Psoas muscle (tissue), 8 donors: ENCODE measurements at regions of chr19 and their contacts with region 1.

Region 1: GRCh38 chr19:46614114-46614722 is 10.7 kb downstream of the PTGIR start:
- DNase-seq: peak; percentile 86 to 90
- ATAC-seq: peak; percentile 81 to 93 (median 86)
- H3K4me3 ChIP-seq: no peak overlapping the region
- H3K27ac ChIP-seq: no peak overlapping the region
- H3K4me1 ChIP-seq: peaks cover 17% of the 10 kb centered on the region
- H3K27me3 ChIP-seq: no peaks in the 10 kb centered on the region
- CTCF ChIP-seq: peak; percentile 87

Region 2: GRCh38 chr19:46571531-46571930 is 42.7 kb before region 1 on chr19:
- intact Hi-C with region 1: no loop called
- DNase-seq: no peak
- ATAC-seq: no peak
- H3K4me3 ChIP-seq: no peak overlapping the region
- H3K27ac ChIP-seq: no peak overlapping the region
- H3K4me1 ChIP-seq: no peaks in the 10 kb centered on the region
- H3K27me3 ChIP-seq: no peaks in the 10 kb centered on the region
- CTCF ChIP-seq: no peak

Region 3: GRCh38 chr19:46661735-46662592 is 47.7 kb after region 1 on chr19:
- intact Hi-C with region 1: loop called (anchors 1 to 2 kb)
- DNase-seq: peak; percentile 84 to 90
- ATAC-seq: peak; percentile 71 to 84 (median 74)
- H3K4me3 ChIP-seq: peak overlapping the region; percentile 70
- H3K27ac ChIP-seq: peak overlapping the region; percentile 67
- H3K4me1 ChIP-seq: peaks cover 14% of the 10 kb centered on the region
- H3K27me3 ChIP-seq: peaks cover 0 to 29% (median 5%) of the 10 kb centered on the region in 3 donors
- CTCF ChIP-seq: peak; percentile 90

Region 4: DNA sequence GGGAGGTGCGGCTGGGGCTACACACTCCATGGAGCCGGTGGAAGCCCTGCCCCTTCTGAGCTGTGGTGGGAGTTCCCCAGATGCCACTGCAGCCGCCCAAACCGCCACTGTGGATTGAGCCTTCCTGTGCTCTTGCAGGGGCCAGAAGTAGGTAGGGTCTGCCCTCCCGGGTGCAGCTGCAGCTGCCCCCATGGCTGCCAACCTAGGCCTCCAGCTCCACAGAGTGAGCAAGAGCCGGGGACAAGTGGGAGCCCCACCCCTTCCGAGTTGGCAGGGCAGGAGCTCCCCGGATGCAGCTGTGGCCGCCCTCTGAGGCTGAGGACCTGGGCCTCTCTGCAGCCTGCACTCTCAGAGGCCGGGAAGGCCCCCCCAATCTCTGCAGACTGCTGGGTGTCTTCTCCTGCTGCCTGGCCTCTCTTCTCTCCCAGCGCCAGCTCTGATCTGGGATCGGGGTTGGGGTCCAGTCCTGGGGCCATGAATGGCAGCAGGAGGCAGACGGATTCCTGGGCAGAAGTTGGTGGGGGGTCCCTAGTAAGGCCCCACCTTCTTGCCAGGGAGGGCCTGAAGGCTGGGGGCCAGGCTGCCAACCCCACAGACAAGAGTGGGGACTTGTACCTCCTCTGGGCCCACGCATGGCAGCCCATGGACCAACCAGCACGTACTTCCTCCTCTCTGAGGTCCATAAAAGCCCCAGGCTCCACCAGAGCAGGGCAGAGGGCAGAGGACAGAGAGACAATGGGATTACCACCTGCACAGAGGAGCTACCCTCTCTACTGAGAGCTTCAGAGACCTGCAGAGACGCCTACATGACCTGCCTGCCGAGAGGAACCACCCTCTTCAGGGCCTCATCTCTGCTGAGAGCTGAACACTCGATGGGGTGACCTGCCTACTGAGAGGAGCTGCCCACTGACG is 207.5 kb after region 1 on chr19:
- intact Hi-C with region 1: no loop called
- DNase-seq: no peak
- ATAC-seq: peak in 1 of 4 donors; percentile 42
- H3K4me3 ChIP-seq: no peak overlapping the region
- H3K27ac ChIP-seq: no peak overlapping the region
- H3K4me1 ChIP-seq: no peaks in the 10 kb centered on the region
- H3K27me3 ChIP-seq: no peaks in the 10 kb centered on the region
- CTCF ChIP-seq: no peak